Activated T-helper 1 cell treated with anti-CD3 and anti-CD28 coated beads, Interleukin-12 subunit alpha, Interleukin-12 subunit beta, Interleukin-2, Interleukin-4 antibody, amounts not matched to agents 30 ng/mL and 10 ng/mL and 1 ng/mL, durations not matched to agents 14 hours and 24 hours and 36 hours (primary cell): ENCODE measurements at regions of chr5 and their contacts with region 1.

Region 1: GRCh38 chr5:154214371-154215106 is 24.0 kb downstream of the GALNT10 start:
- DNase-seq: peak; percentile 17
- H3K4me3 Mint-ChIP-seq: peak overlapping the region; percentile 68
- H3K27ac Mint-ChIP-seq: peak overlapping the region; percentile 91
- H3K4me1 Mint-ChIP-seq: peaks cover 77% of the 10 kb centered on the region
- H3K27me3 Mint-ChIP-seq: no peaks in the 10 kb centered on the region

Region 2: GRCh38 chr5:154196955-154197652 is 17.4 kb before region 1 on chr5:
- intact Hi-C with region 1: loop called (anchors 1 kb)
- DNase-seq: no peak
- H3K4me3 Mint-ChIP-seq: peak overlapping the region; percentile 73
- H3K27ac Mint-ChIP-seq: peak overlapping the region; percentile 94
- H3K4me1 Mint-ChIP-seq: peaks cover 93% of the 10 kb centered on the region
- H3K27me3 Mint-ChIP-seq: no peaks in the 10 kb centered on the region

Region 3: GRCh38 chr5:154202379-154203260 is 11.9 kb before region 1 on chr5:
- intact Hi-C with region 1: loop called (anchors 1 kb)
- DNase-seq: peak; percentile 53
- H3K4me3 Mint-ChIP-seq: peak overlapping the region; percentile 67
- H3K27ac Mint-ChIP-seq: peak overlapping the region; percentile 85
- H3K4me1 Mint-ChIP-seq: peaks cover 94% of the 10 kb centered on the region
- H3K27me3 Mint-ChIP-seq: no peaks in the 10 kb centered on the region

Region 4: DNA sequence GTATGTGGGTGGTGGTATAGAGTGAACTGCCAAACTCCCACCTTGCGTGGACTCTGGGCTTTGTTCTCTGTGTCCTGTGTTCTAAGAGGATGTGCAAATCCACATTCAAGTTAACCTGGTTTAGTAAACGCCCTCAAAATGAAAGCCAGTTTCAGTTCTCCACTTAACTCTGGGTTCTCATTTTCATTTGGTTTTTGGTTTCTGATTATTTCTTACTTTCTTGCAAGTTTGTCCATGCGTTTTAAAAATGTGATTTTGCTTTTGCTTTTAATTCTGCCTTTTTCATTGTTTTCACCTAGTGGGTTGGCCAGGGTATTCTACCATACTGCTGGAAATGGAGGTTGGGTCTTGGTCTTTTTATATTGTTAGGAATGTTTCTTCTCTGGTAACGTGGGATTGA is 14.2 kb after region 1 on chr5:
- intact Hi-C with region 1: loop called (anchors 1 kb)
- DNase-seq: no peak
- H3K4me3 Mint-ChIP-seq: peak overlapping the region; percentile 12
- H3K27ac Mint-ChIP-seq: peak overlapping the region; percentile 24
- H3K4me1 Mint-ChIP-seq: peaks cover 55% of the 10 kb centered on the region
- H3K27me3 Mint-ChIP-seq: no peaks in the 10 kb centered on the region

Region 5: DNA sequence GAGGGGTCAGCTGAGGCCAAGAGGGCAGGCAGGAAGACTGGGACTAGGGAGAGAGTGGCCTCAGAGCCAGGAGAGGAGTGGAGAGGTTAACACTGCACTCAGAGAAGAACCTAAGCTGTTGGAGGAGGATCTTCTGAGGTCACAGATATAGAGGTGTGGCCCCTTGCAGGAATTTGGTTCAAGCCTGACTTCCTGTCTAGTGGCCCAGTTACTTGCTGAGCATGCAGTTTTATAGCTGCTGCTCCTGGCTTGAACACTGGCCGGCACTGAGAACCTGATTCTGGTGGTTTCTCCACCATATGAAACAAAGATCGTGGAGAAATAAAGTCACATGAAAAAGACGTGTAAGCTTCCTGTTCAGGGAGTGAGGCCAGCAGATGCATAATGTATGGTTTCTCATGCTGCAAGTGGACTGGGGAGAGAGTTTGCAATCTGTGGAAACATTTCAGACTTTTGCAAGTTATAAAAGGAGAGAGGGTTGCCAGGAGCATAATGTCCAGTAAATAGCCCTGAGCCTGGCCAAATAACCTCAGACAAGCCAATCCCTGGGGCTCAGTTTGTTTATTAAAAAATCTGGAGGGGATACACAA is 58.6 kb after region 1 on chr5:
- intact Hi-C with region 1: loop called (anchors 1 kb)
- DNase-seq: peak; percentile 27
- H3K4me3 Mint-ChIP-seq: peak overlapping the region; percentile 54
- H3K27ac Mint-ChIP-seq: peak overlapping the region; percentile 79
- H3K4me1 Mint-ChIP-seq: peaks cover 69% of the 10 kb centered on the region
- H3K27me3 Mint-ChIP-seq: no peaks in the 10 kb centered on the region

Region 6: DNA sequence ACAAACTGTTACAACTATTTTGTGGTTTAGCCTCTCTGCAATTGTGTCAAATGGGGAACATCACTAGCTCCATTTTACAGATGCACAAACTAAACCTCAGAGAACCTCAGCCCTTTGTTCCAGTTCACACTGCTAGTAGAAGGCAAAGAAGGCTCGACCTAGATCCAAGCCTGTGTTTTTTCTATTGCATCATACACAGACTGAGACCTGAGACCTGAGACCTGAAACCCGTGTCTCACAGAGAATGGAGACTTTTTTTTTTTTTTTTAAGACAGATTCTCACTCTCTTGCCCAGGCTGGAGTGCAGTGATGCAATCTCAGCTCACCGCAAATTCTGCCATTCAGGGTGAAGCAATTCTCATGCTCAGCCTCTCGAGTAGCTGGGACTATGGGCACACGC is 96.8 kb after region 1 on chr5:
- intact Hi-C with region 1: loop called (anchors 1 kb)
- DNase-seq: no peak
- H3K4me3 Mint-ChIP-seq: no peak overlapping the region
- H3K27ac Mint-ChIP-seq: no peak overlapping the region
- H3K4me1 Mint-ChIP-seq: peaks cover 44% of the 10 kb centered on the region
- H3K27me3 Mint-ChIP-seq: no peaks in the 10 kb centered on the region

Region 7: GRCh38 chr5:154445422-154446182 is 231.1 kb after region 1 on chr5 and contains the start of gene SAP30L:
- intact Hi-C with region 1: loop called (anchors 2 kb)
- DNase-seq: peak; percentile 96
- H3K4me3 Mint-ChIP-seq: peak within 1 kb of the TSS; percentile 99
- H3K27ac Mint-ChIP-seq: peak within 1 kb of the TSS; percentile 95
- H3K4me1 Mint-ChIP-seq: peaks cover 65% of the 10 kb centered on the region
- H3K27me3 Mint-ChIP-seq: no peaks in the 10 kb centered on the region
- total RNA-seq, gene SAP30L: 37.5 and 44.4 TPM in 2 replicates